ENCODE measurements at regions of chr17 and their contacts with region 1.

Region 1: GRCh38 chr17:68011199-68011665 is 15.0 kb upstream of the C17orf58 start:
- DNase-seq: peak; percentile 31 to 66 (median 55)
- H3K4me3 ChIP-seq: peak overlapping the region; percentile 20
- H3K4me3 Mint-ChIP-seq: peak overlapping the region in 6 of 7 donors; percentile 46 to 73 (median 62)
- H3K27ac ChIP-seq: no peak overlapping the region
- H3K27ac Mint-ChIP-seq: peak overlapping the region in 1 of 8 donors; percentile 63
- H3K4me1 ChIP-seq: no peaks in the 10 kb centered on the region
- H3K4me1 Mint-ChIP-seq: peaks cover 4 to 6% (median 5%) of the 10 kb centered on the region in 3 donors
- H3K27me3 ChIP-seq: no peaks in the 10 kb centered on the region
- H3K27me3 Mint-ChIP-seq: peaks cover 0 to 3% of the 10 kb centered on the region in 2 donors

Region 2: DNA sequence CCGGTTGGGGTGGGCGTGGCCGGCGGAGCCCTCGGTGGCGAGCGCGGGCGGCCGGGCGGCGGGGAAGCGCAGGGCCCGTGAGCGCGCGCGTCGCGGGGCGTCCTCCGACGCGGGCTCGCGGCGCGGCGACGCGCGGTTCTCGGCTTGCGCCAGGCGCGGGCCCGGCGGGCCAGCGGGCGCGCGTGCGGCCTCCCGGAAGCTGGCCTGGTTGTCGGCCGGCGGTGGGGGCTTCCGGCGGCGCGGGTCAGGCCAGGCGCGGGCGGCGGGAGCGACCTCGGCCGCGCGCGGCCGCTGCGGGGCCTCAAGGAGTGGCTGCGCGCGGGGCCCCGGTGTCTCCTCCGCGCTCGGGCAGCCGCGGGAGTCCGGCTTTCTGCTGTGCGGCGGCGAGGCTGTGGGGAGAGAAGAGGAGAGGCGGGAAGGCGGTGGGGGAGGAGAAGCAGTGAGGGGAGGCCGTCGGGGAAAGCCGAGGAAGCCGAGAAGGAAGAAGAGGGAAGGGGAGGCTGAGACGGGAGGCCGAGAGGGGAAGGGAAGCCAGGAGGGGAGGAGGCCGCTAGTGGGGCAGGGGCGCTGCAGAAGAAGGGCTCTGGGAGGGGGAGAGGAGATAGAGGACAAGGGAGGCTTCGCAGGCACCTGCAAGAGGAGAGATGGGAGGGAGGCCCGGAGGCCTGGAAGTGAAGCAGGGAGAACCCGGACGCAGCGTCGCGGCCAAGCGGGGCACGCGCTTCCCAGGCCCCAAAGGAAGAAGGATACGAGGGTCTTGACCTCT is 17.5 kb before region 1 on chr17:
- CTCF ChIA-PET with region 1: interaction called, 28 read pairs
- POLR2A ChIA-PET with region 1: no interaction called
- DNase-seq: no peak
- H3K4me3 ChIP-seq: peak overlapping the region; percentile 53
- H3K4me3 Mint-ChIP-seq: peak overlapping the region; percentile 78 to 93 (median 85)
- H3K27ac ChIP-seq: peak overlapping the region; percentile 75
- H3K27ac Mint-ChIP-seq: peak overlapping the region in 4 of 8 donors; percentile 50 to 94 (median 64)
- H3K4me1 ChIP-seq: peaks cover 27% of the 10 kb centered on the region
- H3K4me1 Mint-ChIP-seq: peaks cover 28 to 35% (median 33%) of the 10 kb centered on the region in 3 donors
- H3K27me3 ChIP-seq: peaks cover 5% of the 10 kb centered on the region
- H3K27me3 Mint-ChIP-seq: peaks cover 13 to 16% of the 10 kb centered on the region in 2 donors

Measured in CD8-positive, alpha-beta memory T cell (primary cell).